ENCODE measurements at regions of chr3 and their contacts with region 1.

Region 1: GRCh38 chr3:148943506-148944205 is 47.7 kb upstream of the GYG1 start:
- DNase-seq: peak in 1 of 2 donors; percentile 50
- H3K4me3 ChIP-seq: no peak overlapping the region
- CTCF ChIP-seq: peak in 1 of 3 donors; percentile 66
- POLR2A ChIP-seq: no peak

Region 2: DNA sequence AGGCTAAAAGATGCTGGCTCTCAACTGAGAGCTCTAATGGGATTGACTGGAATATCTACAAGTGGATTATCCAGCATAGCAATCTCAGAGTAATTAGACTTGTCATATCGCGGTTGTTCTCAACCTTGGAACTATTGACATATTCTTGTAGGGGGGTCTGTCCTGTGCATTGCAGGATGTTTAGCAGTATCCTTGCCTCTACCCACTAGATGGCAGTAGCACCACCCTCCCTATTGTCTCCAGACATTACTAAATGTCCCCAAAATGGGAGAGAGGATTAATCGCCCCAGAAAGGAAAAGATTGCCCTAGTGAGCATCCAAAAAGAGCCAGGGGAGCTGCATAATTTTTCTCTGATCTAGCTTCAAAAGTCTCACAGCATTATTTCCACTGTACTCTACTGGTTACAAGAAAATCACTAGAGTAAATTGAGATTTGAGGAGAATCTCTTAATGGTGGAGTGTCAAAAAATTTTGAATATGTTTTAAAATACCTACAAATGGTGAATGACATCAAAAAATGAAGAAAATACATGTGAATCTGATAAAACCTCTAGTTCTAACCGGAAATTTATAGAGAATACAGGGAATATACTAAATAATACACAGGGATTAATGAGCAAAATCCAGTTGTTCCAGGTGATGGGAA is 634.1 kb before region 1 on chr3:
- intact Hi-C with region 1: loop called (anchors 10 kb)
- DNase-seq: no peak
- H3K4me3 ChIP-seq: no peak overlapping the region
- CTCF ChIP-seq: no peak
- POLR2A ChIP-seq: no peak

Region 3: DNA sequence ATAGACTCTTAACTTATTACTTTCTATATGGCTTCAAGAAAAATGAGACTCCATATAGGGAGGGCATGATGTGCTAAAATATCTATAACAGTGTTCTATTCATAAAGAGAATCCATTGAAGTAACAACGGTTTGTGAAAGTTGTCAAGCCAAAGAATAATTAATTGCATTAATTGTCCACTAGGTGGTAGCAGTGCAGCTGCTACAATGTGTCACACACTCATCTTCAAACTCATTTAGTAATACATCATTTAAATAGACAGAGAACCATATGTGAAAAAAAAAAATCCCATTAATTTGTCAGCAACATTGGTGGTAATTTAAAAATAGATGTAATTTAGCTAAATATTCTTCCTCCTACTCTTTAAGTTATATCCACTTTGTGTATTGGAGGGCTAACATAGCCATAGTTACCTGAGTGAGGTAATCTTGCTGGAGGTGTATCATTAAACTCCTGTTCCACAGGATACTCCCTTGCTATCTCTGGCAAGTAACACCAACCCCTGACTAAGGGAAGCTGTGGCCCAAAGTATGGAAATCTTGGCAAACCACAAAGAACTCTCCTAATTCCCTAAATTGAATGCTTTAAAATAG is 82.3 kb before region 1 on chr3:
- intact Hi-C with region 1: loop called (anchors 10 kb)
- DNase-seq: no peak
- H3K4me3 ChIP-seq: no peak overlapping the region
- CTCF ChIP-seq: no peak
- POLR2A ChIP-seq: no peak

Region 4: GRCh38 chr3:148974726-148975125 is 31.1 kb after region 1 on chr3:
- intact Hi-C with region 1: no loop called
- DNase-seq: no peak
- H3K4me3 ChIP-seq: no peak overlapping the region
- CTCF ChIP-seq: no peak
- POLR2A ChIP-seq: no peak

Measured in lower leg skin (tissue), 4 donors.